Calu3 (cell line): ENCODE measurements at regions of chr10 and their contacts with region 1.

Region 1: DNA sequence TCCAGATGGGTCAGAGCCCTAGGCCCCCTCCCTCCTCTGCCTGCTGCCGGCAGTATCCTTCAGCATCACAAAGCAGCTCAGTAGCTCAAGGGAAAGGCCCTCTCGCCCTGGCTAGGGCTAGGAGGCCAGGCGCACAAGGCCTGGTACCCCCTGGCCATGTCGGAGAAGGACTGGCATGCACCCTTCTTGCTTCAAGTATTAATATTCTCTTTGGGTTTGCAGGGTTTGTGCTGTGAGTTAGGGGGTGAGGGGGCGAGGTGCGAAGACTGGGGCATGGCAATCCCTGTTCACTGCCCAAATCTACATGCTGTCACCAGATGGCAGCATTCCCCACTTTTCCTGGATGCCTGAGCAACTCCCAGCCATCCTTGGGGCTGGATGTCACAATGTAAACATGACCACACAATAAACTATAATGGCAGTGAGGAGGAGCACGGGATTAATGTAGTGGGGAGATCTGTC is 105.2 kb downstream of the NEURL1 start:
- DNase-seq: peak; percentile 63
- H3K4me3 Mint-ChIP-seq: no peak overlapping the region
- H3K27ac Mint-ChIP-seq: no peak overlapping the region
- H3K4me1 Mint-ChIP-seq: peaks cover 9% of the 10 kb centered on the region
- H3K27me3 Mint-ChIP-seq: no peaks in the 10 kb centered on the region
- CTCF ChIP-seq: peak; percentile 25

Region 2: DNA sequence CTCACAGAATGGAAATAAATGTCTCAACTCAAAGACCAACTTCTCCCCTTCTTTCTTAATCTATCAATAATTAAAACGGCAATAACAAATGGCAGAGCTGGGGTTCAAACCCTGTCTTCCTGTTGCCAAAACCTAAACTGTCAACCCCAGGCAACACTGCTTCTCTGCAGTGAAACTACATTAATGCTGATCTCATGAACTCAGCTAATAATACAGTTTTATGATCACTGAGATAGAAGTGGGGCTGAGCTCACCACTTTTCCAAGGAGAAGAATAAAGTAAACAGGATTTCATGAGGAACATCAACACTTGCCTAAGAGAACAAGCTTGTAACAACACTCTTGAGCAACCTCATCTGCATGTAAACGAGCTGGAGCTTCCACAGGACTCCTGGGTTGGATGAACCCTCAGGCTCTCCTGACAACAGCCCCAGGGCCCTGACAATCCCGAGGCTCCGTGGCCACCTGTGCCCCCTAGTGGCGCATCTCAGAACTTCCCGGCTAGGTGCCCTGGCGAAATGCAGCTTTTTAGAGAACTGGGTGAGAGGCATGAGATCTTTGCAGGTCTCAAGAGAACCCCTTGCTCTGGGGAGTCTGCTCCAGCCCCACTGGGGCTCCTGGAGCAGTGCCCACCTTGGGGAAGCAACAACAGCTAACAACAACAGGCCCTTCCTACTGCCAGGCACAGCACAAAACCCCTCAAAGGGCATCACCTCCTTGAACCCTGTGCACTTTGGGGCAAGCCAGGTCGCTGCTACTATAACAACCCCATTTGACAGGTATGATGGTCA is 87.4 kb after region 1 on chr10:
- CTCF ChIA-PET with region 1: interaction called, 15 read pairs
- intact Hi-C with region 1: loop called (anchors 1 kb)
- DNase-seq: peak; percentile 78
- H3K4me3 Mint-ChIP-seq: no peak overlapping the region
- H3K27ac Mint-ChIP-seq: no peak overlapping the region
- H3K4me1 Mint-ChIP-seq: peaks cover 11% of the 10 kb centered on the region
- H3K27me3 Mint-ChIP-seq: peaks cover 11% of the 10 kb centered on the region
- CTCF ChIP-seq: peak; percentile 81